ENCODE measurements at regions of chr11 and their contacts with region 1.

Region 1: DNA sequence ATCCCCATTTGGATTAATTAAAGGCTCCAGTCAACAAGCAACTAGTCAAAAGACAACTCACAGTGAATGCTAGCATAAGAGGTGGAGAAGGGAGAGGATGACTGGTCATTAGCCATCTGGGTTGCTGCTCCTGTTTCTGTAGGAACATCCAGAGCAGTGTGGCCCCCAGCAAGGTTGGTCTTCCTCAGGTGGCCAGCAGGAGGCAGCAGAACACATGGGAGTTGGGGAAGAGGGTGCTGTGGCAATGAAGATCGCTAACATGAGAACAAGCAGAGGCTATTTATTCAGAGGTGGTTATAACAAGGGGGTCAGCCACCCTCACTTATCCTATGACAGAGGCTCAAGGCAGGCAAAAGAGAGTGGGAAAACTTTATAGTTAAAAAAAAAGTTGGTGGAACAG is 21.3 kb downstream of the IZUMO1R start:
- DNase-seq: peak; percentile 73
- ATAC-seq: peak; percentile 70
- H3K4me3 Mint-ChIP-seq: no peak overlapping the region
- H3K27ac Mint-ChIP-seq: no peak overlapping the region
- H3K4me1 Mint-ChIP-seq: no peaks in the 10 kb centered on the region
- H3K27me3 Mint-ChIP-seq: peaks cover 4% of the 10 kb centered on the region

Region 2: GRCh38 chr11:94303966-94304958 is 21.4 kb before region 1 on chr11 and contains the start of gene IZUMO1R:
- CTCF ChIA-PET with region 1: no interaction called
- DNase-seq: no peak
- ATAC-seq: no peak
- H3K4me3 Mint-ChIP-seq: no peak within 1 kb of the TSS
- H3K27ac Mint-ChIP-seq: no peak within 1 kb of the TSS
- H3K4me1 Mint-ChIP-seq: no peaks in the 10 kb centered on the region
- H3K27me3 Mint-ChIP-seq: peaks cover 2% of the 10 kb centered on the region
- total RNA-seq, gene IZUMO1R: not detected

Region 3: DNA sequence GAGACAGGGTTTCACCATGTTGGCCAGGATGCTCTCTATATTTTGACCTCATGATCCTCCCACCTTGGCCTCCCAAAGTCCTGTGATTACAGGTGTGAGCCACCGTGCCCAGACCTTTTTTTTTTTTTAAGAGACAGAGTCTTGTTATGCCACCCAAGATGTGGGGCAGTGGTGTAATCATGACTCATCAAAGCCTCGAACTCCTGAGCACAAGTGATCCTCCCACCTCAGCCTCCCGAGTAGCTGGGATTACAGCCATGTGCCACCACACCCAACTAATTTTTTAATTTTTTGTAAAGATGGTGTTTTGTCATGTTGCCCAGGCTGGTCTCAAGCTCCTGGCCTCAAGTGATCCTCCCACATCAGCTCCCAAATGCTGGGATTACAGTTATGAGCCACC is 16.6 kb after region 1 on chr11:
- CTCF ChIA-PET with region 1: no interaction called
- DNase-seq: no peak
- ATAC-seq: no peak
- H3K4me3 Mint-ChIP-seq: no peak overlapping the region
- H3K27ac Mint-ChIP-seq: no peak overlapping the region
- H3K4me1 Mint-ChIP-seq: no peaks in the 10 kb centered on the region
- H3K27me3 Mint-ChIP-seq: peaks cover 4% of the 10 kb centered on the region

Region 4: GRCh38 chr11:94504689-94505293 is 179.1 kb after region 1 on chr11:
- CTCF ChIA-PET with region 1: interaction called, 31 read pairs
- DNase-seq: no peak
- ATAC-seq: no peak
- H3K4me3 Mint-ChIP-seq: no peak overlapping the region
- H3K27ac Mint-ChIP-seq: no peak overlapping the region
- H3K4me1 Mint-ChIP-seq: no peaks in the 10 kb centered on the region
- H3K27me3 Mint-ChIP-seq: no peaks in the 10 kb centered on the region